CD4-positive, alpha-beta T cell (primary cell): ENCODE measurements at regions of chr9 and their contacts with region 1.

Region 1: DNA sequence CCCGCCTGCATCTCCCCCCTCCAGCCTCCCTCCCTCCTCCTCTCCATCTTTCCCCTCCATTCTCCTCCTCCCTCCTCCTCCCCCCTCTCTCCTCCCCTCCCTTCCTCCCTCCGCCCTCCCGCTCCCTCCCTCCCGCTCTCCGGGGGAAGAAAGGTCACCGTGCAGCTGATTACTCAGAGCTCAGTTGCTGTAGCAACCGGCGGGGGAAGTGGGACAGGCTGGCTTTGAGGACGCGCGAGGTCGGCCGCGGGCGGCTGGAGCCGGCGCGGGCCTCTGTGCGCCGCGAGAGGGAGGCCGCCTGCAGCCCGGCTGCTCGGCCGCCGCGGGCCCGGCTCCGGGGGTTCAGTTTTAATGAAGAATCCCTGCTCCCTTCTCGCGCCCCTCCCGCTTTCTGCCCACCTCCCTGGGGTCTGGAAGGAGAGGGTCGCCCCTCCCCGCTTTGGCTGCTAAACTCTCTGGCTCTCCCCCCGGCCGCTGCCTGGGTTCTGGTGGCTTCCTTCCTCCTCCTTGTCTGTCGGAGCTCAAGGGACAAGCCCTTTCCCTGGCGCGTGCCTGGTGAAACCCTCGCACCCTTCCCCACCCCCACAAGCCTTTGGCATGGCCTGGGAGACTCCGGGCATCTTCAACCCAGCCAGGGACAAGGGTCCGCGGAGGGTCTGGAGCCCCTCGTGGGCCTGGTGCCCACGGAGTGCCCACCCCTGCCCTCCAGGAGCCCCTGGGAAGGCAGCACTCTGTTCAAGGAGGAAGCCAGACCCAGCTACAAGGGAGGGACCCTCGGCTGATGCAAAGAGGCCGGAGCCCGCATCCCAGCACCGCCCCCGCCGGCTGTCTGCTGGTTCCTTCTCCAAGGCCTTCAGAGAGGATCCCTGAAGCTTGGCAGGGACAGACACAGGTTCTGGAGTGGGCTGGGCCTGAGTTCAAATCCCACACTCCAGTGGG is 160.3 kb downstream of the C9orf50 start:
- DNase-seq: peak; percentile 71 to 96 (median 86)
- ATAC-seq: peak; percentile 74
- H3K4me3 ChIP-seq: peak overlapping the region; percentile 55
- H3K4me3 Mint-ChIP-seq: peak overlapping the region; percentile 73
- H3K27ac ChIP-seq: peak overlapping the region; percentile 59 to 87
- H3K27ac Mint-ChIP-seq: peak overlapping the region; percentile 89
- H3K4me1 ChIP-seq: peaks cover 60% of the 10 kb centered on the region
- H3K4me1 Mint-ChIP-seq: peaks cover 35% of the 10 kb centered on the region
- H3K27me3 ChIP-seq: no peaks in the 10 kb centered on the region
- H3K27me3 Mint-ChIP-seq: no peaks in the 10 kb centered on the region
- CTCF ChIP-seq: no peak

Region 2: DNA sequence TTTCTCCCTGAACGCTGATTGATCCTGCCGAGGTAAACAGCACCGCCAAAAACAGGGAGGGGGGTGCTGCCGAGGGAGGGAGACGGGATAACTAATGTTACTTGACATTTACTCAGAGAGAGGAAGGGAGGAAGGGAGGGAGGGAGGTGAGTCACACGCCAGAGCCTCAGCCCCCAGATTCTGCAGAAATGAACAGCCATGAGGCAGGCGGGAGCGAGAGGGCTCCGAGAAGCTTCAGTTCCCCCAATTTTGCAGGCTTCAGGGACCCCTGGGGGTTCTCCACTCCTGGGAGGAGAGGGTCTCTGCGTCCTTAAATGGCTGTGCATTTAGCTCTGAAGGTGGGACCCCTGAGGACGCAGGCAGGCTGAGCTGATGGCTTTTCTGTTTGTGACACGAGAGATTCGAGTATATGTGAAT is 223.4 kb before region 1 on chr9:
- CTCF ChIA-PET with region 1: no interaction called
- POLR2A ChIA-PET with region 1: interaction called, 13 read pairs
- intact Hi-C with region 1: no loop called
- DNase-seq: peak in 13 of 14 experiments; percentile 22 to 81 (median 53)
- ATAC-seq: peak; percentile 62
- H3K4me3 ChIP-seq: peak overlapping the region; percentile 53
- H3K4me3 Mint-ChIP-seq: peak overlapping the region; percentile 94
- H3K27ac ChIP-seq: peak overlapping the region; percentile 56 to 79
- H3K27ac Mint-ChIP-seq: peak overlapping the region; percentile 99
- H3K4me1 ChIP-seq: peaks cover 52% of the 10 kb centered on the region
- H3K4me1 Mint-ChIP-seq: peaks cover 75% of the 10 kb centered on the region
- H3K27me3 ChIP-seq: no peaks in the 10 kb centered on the region
- H3K27me3 Mint-ChIP-seq: no peaks in the 10 kb centered on the region
- CTCF ChIP-seq: no peak

Region 3: DNA sequence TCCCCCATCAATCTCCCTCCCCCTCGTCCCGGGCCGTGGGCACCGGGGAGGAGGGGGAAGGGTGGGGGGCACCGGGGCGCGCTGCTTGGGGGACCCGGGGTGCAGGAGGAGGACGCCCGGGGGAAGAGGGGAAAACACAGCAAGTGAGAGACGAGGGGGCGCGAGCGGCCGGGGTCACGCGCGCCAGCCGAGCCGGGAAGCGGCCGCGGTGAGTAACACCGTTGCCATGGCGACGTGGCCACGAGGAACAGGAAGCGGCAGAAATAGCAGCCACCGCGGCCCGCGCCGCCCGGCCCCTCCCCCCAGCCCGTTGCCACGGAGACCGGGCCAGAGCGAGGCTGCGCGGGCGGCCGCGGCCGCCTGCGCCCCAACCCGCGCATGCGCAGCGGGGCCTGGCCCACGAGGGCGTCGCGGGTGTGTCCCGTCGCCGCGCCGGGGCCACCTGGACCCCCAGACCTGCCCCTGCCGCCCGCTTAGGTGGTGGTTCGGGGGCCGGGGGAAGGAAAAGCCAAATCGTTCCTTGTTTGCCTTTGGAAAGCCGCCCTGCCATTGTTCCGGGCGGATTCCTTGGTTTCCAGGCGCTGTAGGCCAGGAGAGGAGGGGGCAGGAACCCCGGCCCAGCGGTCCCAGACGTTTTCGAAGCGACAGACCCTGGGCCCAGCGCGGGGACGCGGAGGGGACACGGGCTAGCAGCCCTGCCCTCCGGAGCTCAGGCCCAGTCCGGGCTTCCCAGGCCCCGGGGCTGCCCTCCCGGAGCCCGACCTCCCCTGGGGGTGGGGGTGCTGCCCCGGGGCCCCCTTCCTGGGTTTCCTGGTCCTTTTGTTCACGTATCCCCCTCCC is 46.8 kb before region 1 on chr9:
- CTCF ChIA-PET with region 1: no interaction called
- POLR2A ChIA-PET with region 1: interaction called, 8 read pairs
- intact Hi-C with region 1: loop called (anchors 1 to 5 kb)
- DNase-seq: peak; percentile 97 to 100 (median 99)
- ATAC-seq: peak; percentile 74
- H3K4me3 ChIP-seq: peak overlapping the region; percentile 63
- H3K4me3 Mint-ChIP-seq: peak overlapping the region; percentile 95
- H3K27ac ChIP-seq: peak overlapping the region; percentile 95 to 96
- H3K27ac Mint-ChIP-seq: peak overlapping the region; percentile 99
- H3K4me1 ChIP-seq: peaks cover 37% of the 10 kb centered on the region
- H3K4me1 Mint-ChIP-seq: peaks cover 38% of the 10 kb centered on the region
- H3K27me3 ChIP-seq: no peaks in the 10 kb centered on the region
- H3K27me3 Mint-ChIP-seq: no peaks in the 10 kb centered on the region
- CTCF ChIP-seq: no peak

Region 4: DNA sequence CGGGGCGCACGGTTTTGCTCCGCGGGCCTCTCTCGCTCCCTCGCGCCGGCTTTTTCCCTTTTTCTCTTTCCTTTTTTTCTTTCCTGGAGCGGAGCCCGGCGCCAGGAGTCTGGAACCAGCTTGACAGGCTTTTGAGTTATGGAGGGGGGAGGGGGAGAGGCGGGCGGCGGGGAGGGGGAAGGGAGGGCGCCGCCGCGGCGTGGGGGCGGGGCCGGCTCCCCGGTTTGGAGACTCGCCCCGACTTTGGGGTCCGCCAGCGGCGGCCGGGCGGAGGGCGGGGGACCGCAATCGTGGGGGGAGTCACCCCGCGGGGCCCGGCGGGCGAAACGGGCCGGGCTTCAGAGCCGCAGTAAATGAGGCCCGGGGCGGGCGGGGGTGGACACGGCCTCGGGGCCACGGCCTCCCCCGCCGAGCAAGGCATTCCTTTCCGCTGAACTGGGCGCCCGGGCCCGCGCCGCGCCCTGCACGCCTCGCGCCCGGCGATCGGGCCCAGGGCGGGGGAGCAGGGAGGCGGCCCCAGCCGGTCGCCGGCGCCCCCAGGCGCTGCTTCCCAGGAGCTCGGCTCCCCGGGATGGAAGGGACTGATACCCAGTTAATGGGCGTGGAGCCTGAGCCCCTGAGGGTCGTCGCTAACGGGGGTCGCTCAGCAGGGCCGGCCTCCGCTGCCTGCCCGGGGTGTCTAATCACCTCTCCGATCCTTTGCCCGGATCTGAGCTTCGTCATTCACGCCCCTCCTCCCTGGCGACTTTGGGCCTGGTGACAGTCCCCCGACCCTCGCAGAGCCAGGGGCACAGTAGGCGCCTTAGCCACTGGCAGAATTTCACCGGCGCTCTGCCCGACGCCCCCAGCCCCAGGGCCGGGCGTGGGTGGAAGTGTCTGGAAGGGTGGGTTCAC is 22.2 kb after region 1 on chr9:
- CTCF ChIA-PET with region 1: interaction called, 3 read pairs
- POLR2A ChIA-PET with region 1: interaction called, 21 read pairs
- intact Hi-C with region 1: loop called in 1 of 2 experiments (anchors 2 kb)
- DNase-seq: peak in 9 of 14 experiments; percentile 13 to 65 (median 49)
- ATAC-seq: peak; percentile 31
- H3K4me3 ChIP-seq: peak overlapping the region; percentile 45
- H3K4me3 Mint-ChIP-seq: peak overlapping the region; percentile 78
- H3K27ac ChIP-seq: peak overlapping the region in 1 of 2 donors; percentile 65
- H3K27ac Mint-ChIP-seq: peak overlapping the region; percentile 39
- H3K4me1 ChIP-seq: peaks cover 52% of the 10 kb centered on the region
- H3K4me1 Mint-ChIP-seq: peaks cover 31% of the 10 kb centered on the region
- H3K27me3 ChIP-seq: peaks cover 0 to 2% of the 10 kb centered on the region in 2 experiments
- H3K27me3 Mint-ChIP-seq: no peaks in the 10 kb centered on the region
- CTCF ChIP-seq: no peak

Region 5: DNA sequence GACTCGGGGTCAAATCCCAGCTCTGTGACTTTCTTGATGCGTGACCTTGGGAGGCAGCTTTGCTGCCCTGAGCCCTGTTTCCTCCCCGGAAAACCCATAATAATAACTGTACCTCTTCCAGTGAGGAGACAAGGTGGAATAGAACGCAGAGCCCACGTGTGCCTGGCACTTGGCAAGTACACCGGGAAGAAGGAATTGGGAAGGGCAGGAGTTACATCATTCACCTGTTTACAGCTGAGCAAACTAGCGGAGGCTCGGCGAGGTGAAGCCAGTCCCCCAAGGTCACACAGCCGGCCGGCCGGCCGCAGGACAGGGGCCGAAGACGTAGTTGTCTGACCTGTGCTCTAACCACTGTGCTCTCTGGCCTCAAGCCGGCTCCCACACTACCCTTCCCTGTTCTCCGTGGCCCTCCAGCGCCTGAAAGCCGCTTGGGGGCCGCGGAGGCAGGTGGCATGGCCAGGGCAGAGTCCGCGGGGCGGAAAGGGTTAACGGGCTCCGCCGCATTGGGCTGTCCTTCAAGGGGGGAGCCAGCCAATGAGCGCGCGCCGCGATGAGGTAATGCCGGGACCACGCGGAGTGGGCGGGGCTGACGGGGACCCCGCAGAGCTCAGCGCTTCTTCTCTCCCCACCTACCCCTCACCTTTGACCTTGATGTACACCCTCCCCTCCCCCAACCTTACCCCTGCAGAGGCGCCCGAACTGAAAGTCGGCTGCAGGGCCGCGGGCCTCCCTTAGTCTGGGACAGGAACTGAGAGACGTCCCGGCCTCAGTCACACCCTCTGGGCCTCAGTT is 35.1 kb after region 1 on chr9:
- CTCF ChIA-PET with region 1: interaction called, 10 read pairs
- POLR2A ChIA-PET with region 1: interaction called, 7 read pairs
- intact Hi-C with region 1: loop called in 1 of 2 experiments (anchors 5 kb)
- DNase-seq: peak; percentile 58 to 91 (median 80)
- ATAC-seq: peak; percentile 82
- H3K4me3 ChIP-seq: peak overlapping the region; percentile 75
- H3K4me3 Mint-ChIP-seq: peak overlapping the region; percentile 86
- H3K27ac ChIP-seq: no peak overlapping the region
- H3K27ac Mint-ChIP-seq: peak overlapping the region; percentile 62
- H3K4me1 ChIP-seq: peaks cover 40% of the 10 kb centered on the region
- H3K4me1 Mint-ChIP-seq: peaks cover 39% of the 10 kb centered on the region
- H3K27me3 ChIP-seq: no peaks in the 10 kb centered on the region
- H3K27me3 Mint-ChIP-seq: peaks cover 3% of the 10 kb centered on the region
- CTCF ChIP-seq: no peak